ENCODE measurements at regions of chr19 and their contacts with region 1.

Region 1: GRCh38 chr19:3108775-3109174 is 14.6 kb downstream of the GNA11 start:
- DNase-seq: peak; percentile 37 to 82 (median 75)
- ATAC-seq: peak; percentile 65
- H3K4me3 ChIP-seq: no peak overlapping the region
- H3K4me3 Mint-ChIP-seq: no peak overlapping the region
- H3K27ac ChIP-seq: no peak overlapping the region
- H3K27ac Mint-ChIP-seq: no peak overlapping the region
- H3K4me1 ChIP-seq: peaks cover 4% of the 10 kb centered on the region
- H3K4me1 Mint-ChIP-seq: peaks cover 8% of the 10 kb centered on the region
- H3K27me3 ChIP-seq: no peaks in the 10 kb centered on the region
- H3K27me3 Mint-ChIP-seq: peaks cover 2% of the 10 kb centered on the region
- CTCF ChIP-seq: peak; percentile 82

Region 2: DNA sequence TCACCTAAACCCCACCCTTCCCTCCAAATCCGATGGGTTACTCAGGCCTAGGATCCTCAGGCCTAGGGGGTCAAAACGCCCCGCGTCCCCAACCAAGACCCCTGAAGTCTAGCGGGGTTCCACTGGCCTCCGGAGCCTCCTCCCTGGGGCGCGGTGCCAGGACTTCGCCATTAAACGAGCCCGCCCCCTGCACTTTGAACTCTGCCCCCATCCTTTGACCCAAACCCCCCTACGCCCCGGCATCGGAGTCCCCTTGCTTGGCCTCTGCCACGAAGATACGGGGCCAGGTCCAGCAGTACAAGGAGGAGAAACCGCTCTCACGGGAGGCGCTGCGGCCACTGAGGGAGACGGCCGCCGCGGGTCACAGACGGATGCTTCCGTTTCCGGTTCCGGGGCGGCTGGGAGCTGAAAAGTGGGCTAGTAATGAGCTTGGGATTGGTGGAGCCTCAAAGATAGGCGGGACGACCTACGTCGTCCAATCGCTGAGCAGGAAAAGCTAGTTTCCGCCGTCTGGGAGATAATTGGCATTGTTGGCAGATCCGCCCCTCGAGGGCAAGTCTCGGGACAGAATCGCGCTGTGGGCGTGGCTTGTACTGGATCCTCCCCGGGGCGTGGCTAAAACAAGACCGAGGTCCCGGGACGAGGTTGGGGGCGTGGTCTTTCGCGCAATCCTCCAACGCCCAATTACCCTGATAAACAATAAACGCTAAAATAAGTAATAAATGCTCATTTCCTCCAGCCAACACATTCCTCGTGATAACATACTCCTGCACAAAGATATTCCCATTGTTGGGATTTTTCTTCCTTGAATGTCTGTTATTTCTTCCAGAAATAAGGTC is 158.3 kb before region 1 on chr19:
- CTCF ChIA-PET with region 1: interaction called, 55 read pairs
- POLR2A ChIA-PET with region 1: interaction called, 4 read pairs
- intact Hi-C with region 1: loop called (anchors 1 kb)
- DNase-seq: peak; percentile 100
- ATAC-seq: peak; percentile 93
- H3K4me3 ChIP-seq: peak overlapping the region; percentile 77 to 80
- H3K4me3 Mint-ChIP-seq: peak overlapping the region; percentile 97
- H3K27ac ChIP-seq: peak overlapping the region; percentile 78 to 97
- H3K27ac Mint-ChIP-seq: peak overlapping the region; percentile 98
- H3K4me1 ChIP-seq: peaks cover 12% of the 10 kb centered on the region
- H3K4me1 Mint-ChIP-seq: peaks cover 32% of the 10 kb centered on the region
- H3K27me3 ChIP-seq: no peaks in the 10 kb centered on the region
- H3K27me3 Mint-ChIP-seq: no peaks in the 10 kb centered on the region
- CTCF ChIP-seq: no peak

Region 3: GRCh38 chr19:3054972-3055740 is 53.6 kb before region 1 on chr19:
- CTCF ChIA-PET with region 1: interaction called, 24 read pairs
- POLR2A ChIA-PET with region 1: no interaction called
- intact Hi-C with region 1: no loop called
- DNase-seq: no peak
- ATAC-seq: no peak
- H3K4me3 ChIP-seq: no peak overlapping the region
- H3K4me3 Mint-ChIP-seq: peak overlapping the region; percentile 42
- H3K27ac ChIP-seq: no peak overlapping the region
- H3K27ac Mint-ChIP-seq: peak overlapping the region; percentile 77
- H3K4me1 ChIP-seq: peaks cover 75% of the 10 kb centered on the region
- H3K4me1 Mint-ChIP-seq: peaks cover 55% of the 10 kb centered on the region
- H3K27me3 ChIP-seq: no peaks in the 10 kb centered on the region
- H3K27me3 Mint-ChIP-seq: no peaks in the 10 kb centered on the region
- CTCF ChIP-seq: no peak

Region 4: GRCh38 chr19:3087769-3088168 is 21.0 kb before region 1 on chr19:
- CTCF ChIA-PET with region 1: interaction called, 23 read pairs
- POLR2A ChIA-PET with region 1: no interaction called
- intact Hi-C with region 1: no loop called
- DNase-seq: no peak
- ATAC-seq: no peak
- H3K4me3 ChIP-seq: no peak overlapping the region
- H3K4me3 Mint-ChIP-seq: no peak overlapping the region
- H3K27ac ChIP-seq: no peak overlapping the region
- H3K27ac Mint-ChIP-seq: no peak overlapping the region
- H3K4me1 ChIP-seq: no peaks in the 10 kb centered on the region
- H3K4me1 Mint-ChIP-seq: no peaks in the 10 kb centered on the region
- H3K27me3 ChIP-seq: no peaks in the 10 kb centered on the region
- H3K27me3 Mint-ChIP-seq: no peaks in the 10 kb centered on the region
- CTCF ChIP-seq: no peak

Region 5: DNA sequence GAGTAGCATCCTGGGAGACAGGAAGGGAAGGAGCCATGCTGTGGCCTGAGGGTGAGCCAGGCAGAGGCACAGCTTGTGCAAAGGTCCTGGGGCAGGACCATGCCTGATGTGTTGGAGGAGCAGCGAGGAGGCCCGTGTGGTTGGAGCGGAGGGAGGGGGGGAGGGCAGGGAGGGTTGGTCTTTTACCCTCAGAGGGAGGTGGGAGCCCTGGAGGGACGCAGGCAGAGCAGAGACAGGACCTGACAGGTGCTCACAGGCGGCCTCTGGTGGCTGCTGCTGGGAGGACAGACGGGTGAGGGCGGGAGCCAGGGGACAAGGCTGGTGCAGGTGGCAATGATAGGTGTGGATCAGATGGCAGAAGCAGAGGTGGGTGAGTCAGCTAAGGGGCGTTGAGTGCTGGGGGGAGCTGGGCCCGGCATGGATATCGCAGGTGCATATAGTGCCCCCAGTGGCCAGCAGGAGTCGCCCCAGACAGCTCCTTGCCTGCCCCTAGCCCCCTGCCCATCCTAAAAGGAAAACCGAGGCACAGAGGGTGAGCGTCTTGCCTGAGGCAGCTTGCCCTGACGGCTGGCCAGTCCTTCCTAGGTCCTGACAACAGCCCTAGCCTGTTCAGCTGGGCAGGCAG is 17.2 kb after region 1 on chr19:
- CTCF ChIA-PET with region 1: interaction called, 57 read pairs
- POLR2A ChIA-PET with region 1: no interaction called
- intact Hi-C with region 1: no loop called
- DNase-seq: peak; percentile 58 to 80 (median 71)
- ATAC-seq: peak; percentile 97
- H3K4me3 ChIP-seq: no peak overlapping the region
- H3K4me3 Mint-ChIP-seq: no peak overlapping the region
- H3K27ac ChIP-seq: no peak overlapping the region
- H3K27ac Mint-ChIP-seq: no peak overlapping the region
- H3K4me1 ChIP-seq: no peaks in the 10 kb centered on the region
- H3K4me1 Mint-ChIP-seq: peaks cover 2% of the 10 kb centered on the region
- H3K27me3 ChIP-seq: peaks cover 0 to 3% of the 10 kb centered on the region in 2 experiments
- H3K27me3 Mint-ChIP-seq: peaks cover 2% of the 10 kb centered on the region
- CTCF ChIP-seq: peak; percentile 66

Region 6: DNA sequence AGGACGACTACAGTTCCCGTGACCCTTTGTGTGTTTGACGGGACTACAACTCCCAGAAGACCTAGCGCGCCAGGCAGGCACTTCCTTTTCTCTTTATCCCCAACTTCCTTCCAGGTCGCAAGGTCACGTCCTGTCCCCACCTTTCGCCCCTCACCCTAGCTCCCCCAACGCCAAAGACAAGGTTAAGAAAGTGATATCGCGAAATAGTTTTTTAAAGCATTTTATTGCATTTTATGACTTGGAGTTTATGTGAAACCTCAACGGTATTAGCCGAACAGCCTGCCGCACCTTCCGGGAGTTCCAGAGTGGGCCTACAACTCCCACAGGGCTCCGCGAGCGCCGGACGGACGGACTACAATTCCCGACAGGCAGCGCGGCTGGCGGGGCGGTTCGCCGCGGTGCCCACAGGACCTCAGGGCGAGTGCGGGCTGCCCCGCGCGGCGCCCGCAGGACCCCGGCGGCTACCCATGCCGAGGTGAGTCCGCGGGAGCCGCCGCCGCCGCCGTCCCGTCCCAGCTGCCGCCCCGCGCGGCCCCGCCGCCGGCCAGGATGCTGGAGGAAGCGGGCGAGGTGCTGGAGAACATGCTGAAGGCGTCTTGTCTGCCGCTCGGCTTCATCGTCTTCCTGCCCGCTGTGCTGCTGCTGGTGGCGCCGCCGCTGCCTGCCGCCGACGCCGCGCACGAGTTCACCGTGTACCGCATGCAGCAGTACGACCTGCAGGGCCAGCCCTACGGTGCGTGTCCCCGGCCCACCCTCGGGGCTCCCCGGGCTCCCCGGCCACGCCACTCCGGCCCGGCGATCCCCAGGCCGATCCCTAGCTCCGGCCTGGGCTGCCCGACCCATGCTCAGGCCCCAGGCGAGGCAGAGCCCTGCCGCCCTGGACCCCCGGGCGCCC is 77.0 kb after region 1 on chr19 and contains the start of gene NCLN:
- CTCF ChIA-PET with region 1: no interaction called
- POLR2A ChIA-PET with region 1: no interaction called
- intact Hi-C with region 1: no loop called
- DNase-seq: peak; percentile 91 to 98 (median 94)
- ATAC-seq: peak; percentile 84
- H3K4me3 ChIP-seq: peak within 1 kb of the TSS; percentile 66 to 76
- H3K4me3 Mint-ChIP-seq: peak within 1 kb of the TSS; percentile 92
- H3K27ac ChIP-seq: peak within 1 kb of the TSS; percentile 34 to 84
- H3K27ac Mint-ChIP-seq: peak within 1 kb of the TSS; percentile 89
- H3K4me1 ChIP-seq: peaks cover 67% of the 10 kb centered on the region
- H3K4me1 Mint-ChIP-seq: peaks cover 61% of the 10 kb centered on the region
- H3K27me3 ChIP-seq: no peaks in the 10 kb centered on the region
- H3K27me3 Mint-ChIP-seq: no peaks in the 10 kb centered on the region
- CTCF ChIP-seq: no peak
- total RNA-seq, gene NCLN: 47.3 to 55.7 TPM

Region 7: DNA sequence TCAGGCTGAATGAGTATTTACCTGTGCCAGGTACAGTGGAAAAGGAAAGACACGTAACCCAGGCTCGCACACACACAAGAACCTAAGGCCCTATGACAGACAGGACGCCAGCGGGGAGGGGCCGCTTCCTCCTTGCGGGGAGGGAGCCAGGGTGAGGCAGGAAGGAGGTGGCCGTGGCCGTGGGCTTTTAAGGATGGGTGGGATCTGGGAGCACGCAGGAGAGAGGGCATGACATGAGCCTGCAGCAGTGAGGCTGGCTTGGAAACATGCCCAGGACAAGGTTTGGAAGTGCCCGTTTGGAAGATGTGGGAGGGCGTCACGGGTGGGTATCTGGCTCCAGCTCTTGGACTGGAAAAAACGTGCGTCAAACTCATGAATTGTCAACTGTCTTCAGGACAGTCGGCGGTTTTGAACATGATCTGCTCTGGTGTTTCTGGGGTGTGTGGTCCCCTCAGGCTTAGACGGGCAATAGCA is 1271.5 kb after region 1 on chr19:
- CTCF ChIA-PET with region 1: no interaction called
- POLR2A ChIA-PET with region 1: no interaction called
- intact Hi-C with region 1: no loop called
- DNase-seq: peak in 8 of 9 experiments; percentile 45 to 78 (median 68)
- ATAC-seq: peak; percentile 85
- H3K4me3 ChIP-seq: peak overlapping the region; percentile 40 to 51
- H3K4me3 Mint-ChIP-seq: peak overlapping the region; percentile 79
- H3K27ac ChIP-seq: peak overlapping the region; percentile 66 to 85
- H3K27ac Mint-ChIP-seq: peak overlapping the region; percentile 93
- H3K4me1 ChIP-seq: peaks cover 52% of the 10 kb centered on the region
- H3K4me1 Mint-ChIP-seq: peaks cover 50% of the 10 kb centered on the region
- H3K27me3 ChIP-seq: no peaks in the 10 kb centered on the region
- H3K27me3 Mint-ChIP-seq: no peaks in the 10 kb centered on the region
- CTCF ChIP-seq: no peak

Measured in CD8-positive, alpha-beta T cell (primary cell).